MCF 10A (cell line): ENCODE measurements at regions of chr12 and their contacts with region 1.

Region 1: GRCh38 chr12:88299567-88300101 is 157.5 kb downstream of the TMTC3 start:
- DNase-seq: peak; percentile 86
- H3K4me3 Mint-ChIP-seq: peak overlapping the region; percentile 19
- H3K27ac Mint-ChIP-seq: peak overlapping the region; percentile 85
- H3K4me1 Mint-ChIP-seq: peaks cover 16% of the 10 kb centered on the region
- H3K27me3 Mint-ChIP-seq: no peaks in the 10 kb centered on the region
- CTCF ChIP-seq: no peak

Region 2: DNA sequence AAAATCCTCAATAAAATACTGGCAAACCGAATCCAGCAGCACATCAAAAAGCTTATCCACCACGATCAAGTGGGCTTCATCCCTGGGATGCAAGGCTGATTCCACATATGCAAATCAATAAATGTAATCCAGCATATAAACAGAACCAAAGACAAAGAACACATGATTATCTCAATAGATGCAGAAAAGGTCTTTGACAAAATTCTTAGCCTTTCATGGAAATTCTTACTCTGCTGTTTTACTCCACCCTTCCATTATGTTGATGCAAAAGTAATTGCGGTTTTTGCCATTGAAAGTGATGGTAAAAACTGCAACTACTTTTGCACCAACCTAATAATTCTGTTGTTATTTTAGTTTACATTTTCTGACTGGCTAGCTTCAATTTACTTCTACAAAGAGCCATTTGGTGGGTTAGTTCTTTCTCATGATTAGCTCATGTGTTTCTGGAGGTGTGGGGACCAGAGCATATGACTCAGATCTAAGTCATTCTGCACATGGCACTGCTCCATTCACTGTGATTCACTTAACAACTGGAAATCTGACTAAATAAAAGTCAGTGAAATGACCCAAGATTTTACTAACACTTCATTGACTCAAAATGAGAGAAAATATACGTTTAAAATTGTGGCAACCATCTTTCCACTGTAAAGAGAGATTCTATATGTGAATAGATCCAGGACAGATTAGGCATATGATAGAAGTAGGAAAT is 57.6 kb before region 1 on chr12:
- CTCF ChIA-PET with region 1: no interaction called
- POLR2A ChIA-PET with region 1: interaction called, 7 read pairs
- intact Hi-C with region 1: loop called (anchors 1 kb)
- DNase-seq: peak; percentile 92
- H3K4me3 Mint-ChIP-seq: peak overlapping the region; percentile 45
- H3K27ac Mint-ChIP-seq: peak overlapping the region; percentile 96
- H3K4me1 Mint-ChIP-seq: peaks cover 37% of the 10 kb centered on the region
- H3K27me3 Mint-ChIP-seq: no peaks in the 10 kb centered on the region
- CTCF ChIP-seq: no peak

Region 3: DNA sequence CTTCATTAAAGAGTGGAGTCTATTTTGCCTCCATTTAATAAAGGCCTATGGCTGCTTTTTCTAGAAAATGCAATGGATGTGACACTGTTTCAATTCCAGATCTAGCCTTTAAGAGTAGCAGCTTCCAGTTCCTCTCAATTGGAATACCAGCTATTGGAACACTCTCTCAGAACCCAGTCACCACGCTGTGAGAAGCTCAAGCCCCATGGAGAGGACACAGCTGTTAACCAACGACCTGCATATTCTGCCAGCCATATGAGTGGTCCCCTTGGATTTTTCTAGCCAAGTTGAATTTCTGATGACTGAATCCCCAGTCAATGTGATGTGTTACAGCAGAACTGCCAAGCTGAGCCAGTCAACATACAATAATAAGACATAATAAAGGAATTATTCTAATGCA is 25.8 kb before region 1 on chr12:
- CTCF ChIA-PET with region 1: no interaction called
- POLR2A ChIA-PET with region 1: no interaction called
- intact Hi-C with region 1: no loop called
- DNase-seq: no peak
- H3K4me3 Mint-ChIP-seq: no peak overlapping the region
- H3K27ac Mint-ChIP-seq: no peak overlapping the region
- H3K4me1 Mint-ChIP-seq: no peaks in the 10 kb centered on the region
- H3K27me3 Mint-ChIP-seq: no peaks in the 10 kb centered on the region
- CTCF ChIP-seq: no peak

Region 4: GRCh38 chr12:88383405-88383804 is 83.8 kb after region 1 on chr12:
- CTCF ChIA-PET with region 1: no interaction called
- POLR2A ChIA-PET with region 1: no interaction called
- intact Hi-C with region 1: no loop called
- DNase-seq: no peak
- H3K4me3 Mint-ChIP-seq: no peak overlapping the region
- H3K27ac Mint-ChIP-seq: no peak overlapping the region
- H3K4me1 Mint-ChIP-seq: no peaks in the 10 kb centered on the region
- H3K27me3 Mint-ChIP-seq: no peaks in the 10 kb centered on the region
- CTCF ChIP-seq: no peak